Activated T-helper 1 cell treated with anti-CD3 and anti-CD28 coated beads, Interleukin-12 subunit alpha, Interleukin-12 subunit beta, Interleukin-2, Interleukin-4 antibody, amounts not matched to agents 30 ng/mL and 10 ng/mL and 1 ng/mL, durations not matched to agents 14 hours and 24 hours and 36 hours (primary cell): ENCODE measurements at regions of chr5 and their contacts with region 1.

Region 1: GRCh38 chr5:73201547-73202513 is 28.8 kb downstream of the TMEM174 start:
- DNase-seq: peak; percentile 44
- H3K4me3 Mint-ChIP-seq: no peak overlapping the region
- H3K27ac Mint-ChIP-seq: no peak overlapping the region
- H3K4me1 Mint-ChIP-seq: no peaks in the 10 kb centered on the region
- H3K27me3 Mint-ChIP-seq: peaks cover 19% of the 10 kb centered on the region

Region 2: GRCh38 chr5:72611118-72611730 is 590.6 kb before region 1 on chr5:
- intact Hi-C with region 1: loop called (anchors 5 kb)
- DNase-seq: peak; percentile 1
- H3K4me3 Mint-ChIP-seq: no peak overlapping the region
- H3K27ac Mint-ChIP-seq: no peak overlapping the region
- H3K4me1 Mint-ChIP-seq: no peaks in the 10 kb centered on the region
- H3K27me3 Mint-ChIP-seq: peaks cover 2% of the 10 kb centered on the region

Region 3: DNA sequence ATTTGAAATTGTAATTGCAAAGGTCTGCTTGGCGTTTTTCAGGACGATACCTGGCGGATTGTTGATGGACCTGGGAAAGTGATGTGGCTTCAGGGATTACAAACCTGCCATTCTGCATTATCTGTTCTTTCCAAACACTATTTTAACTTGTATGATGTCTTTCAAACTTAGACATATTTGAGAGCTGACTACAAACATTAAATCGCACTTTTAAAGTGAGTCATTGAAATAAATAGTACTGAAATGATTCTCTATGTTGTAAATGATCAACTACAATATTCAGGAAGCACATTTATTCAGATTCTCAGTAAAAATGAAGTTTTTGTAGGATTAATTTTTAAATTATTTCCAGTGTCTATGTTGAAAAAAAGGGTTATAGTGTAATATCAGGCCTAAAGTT is 113.8 kb before region 1 on chr5:
- intact Hi-C with region 1: loop called (anchors 1 kb)
- DNase-seq: no peak
- H3K4me3 Mint-ChIP-seq: no peak overlapping the region
- H3K27ac Mint-ChIP-seq: no peak overlapping the region
- H3K4me1 Mint-ChIP-seq: no peaks in the 10 kb centered on the region
- H3K27me3 Mint-ChIP-seq: peaks cover 15% of the 10 kb centered on the region